ENCODE measurements at regions of chr10 and their contacts with region 1.

Region 1: DNA sequence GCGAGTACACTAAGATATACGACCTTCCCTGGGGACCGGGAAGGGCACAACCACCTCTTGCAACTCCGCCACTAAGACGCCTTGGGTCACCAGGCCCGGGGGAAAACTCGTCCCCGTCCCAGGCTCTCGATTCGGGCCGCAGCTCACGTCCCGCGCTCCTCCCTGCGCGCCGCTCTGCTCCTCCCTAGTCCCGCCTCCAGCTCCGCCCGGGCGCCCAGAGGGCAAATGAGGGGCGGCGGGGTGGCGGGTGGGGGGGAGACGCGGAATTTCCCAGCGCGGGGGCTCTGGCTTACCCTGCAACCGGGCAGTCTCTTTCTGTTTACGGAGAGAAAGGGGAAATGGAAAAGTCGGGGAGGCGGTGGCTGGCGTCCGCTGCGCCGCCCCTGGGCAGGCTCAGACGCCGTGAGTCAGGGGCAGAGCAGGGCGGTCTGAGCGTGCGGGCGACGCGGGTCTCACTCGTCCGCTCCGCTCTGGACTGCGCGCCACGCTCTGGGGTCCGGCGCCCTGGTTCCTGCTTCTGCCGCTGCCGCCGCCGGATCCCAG is at the start of gene MAP3K8:
- DNase-seq: peak; percentile 86 to 93
- ATAC-seq: peak; percentile 69 to 90 (median 81)
- H3K4me3 ChIP-seq: peak within 1 kb of the TSS; percentile 98
- H3K4me3 Mint-ChIP-seq: peak within 1 kb of the TSS; percentile 89
- H3K27ac ChIP-seq: peak within 1 kb of the TSS; percentile 97
- H3K27ac Mint-ChIP-seq: peak within 1 kb of the TSS; percentile 93 to 98
- H3K4me1 ChIP-seq: peaks cover 27% of the 10 kb centered on the region
- H3K4me1 Mint-ChIP-seq: peaks cover 49 to 51% of the 10 kb centered on the region in 2 donors
- H3K27me3 ChIP-seq: no peaks in the 10 kb centered on the region
- H3K27me3 Mint-ChIP-seq: no peaks in the 10 kb centered on the region
- CTCF ChIP-seq: no peak
- total RNA-seq, gene MAP3K8: 200 to 244 (median 236) TPM

Region 2: GRCh38 chr10:30413996-30414576 is 19.7 kb before region 1 on chr10:
- intact Hi-C with region 1: loop called (anchors 2 kb)
- DNase-seq: peak in 1 of 2 donors; percentile 78
- ATAC-seq: peak; percentile 86 to 95 (median 94)
- H3K4me3 ChIP-seq: no peak overlapping the region
- H3K4me3 Mint-ChIP-seq: no peak overlapping the region
- H3K27ac ChIP-seq: no peak overlapping the region
- H3K27ac Mint-ChIP-seq: no peak overlapping the region
- H3K4me1 ChIP-seq: peaks cover 8% of the 10 kb centered on the region
- H3K4me1 Mint-ChIP-seq: peaks cover 14 to 18% of the 10 kb centered on the region in 2 donors
- H3K27me3 ChIP-seq: no peaks in the 10 kb centered on the region
- H3K27me3 Mint-ChIP-seq: no peaks in the 10 kb centered on the region
- CTCF ChIP-seq: peak; percentile 80

Region 3: DNA sequence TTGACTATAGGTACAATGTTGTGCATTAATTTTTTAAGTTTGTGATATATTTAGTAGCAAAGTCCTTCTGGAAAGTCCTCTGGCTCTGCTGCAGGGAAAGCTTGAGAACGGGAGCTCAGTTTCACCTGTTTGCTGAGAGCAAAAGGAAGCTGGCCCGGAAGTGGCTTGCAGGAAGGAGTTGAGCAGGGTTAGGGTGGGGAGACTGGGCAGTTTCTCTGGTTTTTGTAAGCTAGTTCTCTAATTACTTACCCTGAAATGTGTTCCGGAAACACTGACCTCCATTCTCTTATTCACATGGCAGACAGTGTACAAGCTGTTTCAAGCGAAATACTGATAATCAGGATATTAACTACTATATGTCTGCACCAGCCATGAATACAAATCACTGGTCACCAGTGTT is 22.5 kb after region 1 on chr10:
- intact Hi-C with region 1: loop called (anchors 2 kb)
- DNase-seq: peak in 1 of 2 donors; percentile 61
- ATAC-seq: peak; percentile 71 to 75 (median 73)
- H3K4me3 ChIP-seq: peak overlapping the region; percentile 5
- H3K4me3 Mint-ChIP-seq: peak overlapping the region; percentile 75
- H3K27ac ChIP-seq: peak overlapping the region; percentile 82
- H3K27ac Mint-ChIP-seq: peak overlapping the region; percentile 83 to 88
- H3K4me1 ChIP-seq: peaks cover 45% of the 10 kb centered on the region
- H3K4me1 Mint-ChIP-seq: peaks cover 32 to 44% of the 10 kb centered on the region in 2 donors
- H3K27me3 ChIP-seq: no peaks in the 10 kb centered on the region
- H3K27me3 Mint-ChIP-seq: no peaks in the 10 kb centered on the region
- CTCF ChIP-seq: no peak

Region 4: GRCh38 chr10:30502266-30503060 is 68.7 kb after region 1 on chr10:
- intact Hi-C with region 1: loop called (anchors 2 kb)
- DNase-seq: peak; percentile 60 to 77
- ATAC-seq: peak; percentile 72 to 92 (median 91)
- H3K4me3 ChIP-seq: peak overlapping the region; percentile 26
- H3K4me3 Mint-ChIP-seq: peak overlapping the region; percentile 77
- H3K27ac ChIP-seq: peak overlapping the region; percentile 90
- H3K27ac Mint-ChIP-seq: peak overlapping the region; percentile 85 to 92
- H3K4me1 ChIP-seq: peaks cover 77% of the 10 kb centered on the region
- H3K4me1 Mint-ChIP-seq: peaks cover 91 to 94% of the 10 kb centered on the region in 2 donors
- H3K27me3 ChIP-seq: no peaks in the 10 kb centered on the region
- H3K27me3 Mint-ChIP-seq: no peaks in the 10 kb centered on the region
- CTCF ChIP-seq: no peak